PC-9 (cell line): ENCODE measurements at regions of chr6 and their contacts with region 1.

Region 1: GRCh38 chr6:75449716-75450115 is 43.9 kb downstream of the FILIP1 start:
- DNase-seq: peak; percentile 40 to 54
- H3K4me3 ChIP-seq: no peak overlapping the region
- H3K27ac ChIP-seq: no peak overlapping the region
- H3K4me1 ChIP-seq: no peaks in the 10 kb centered on the region
- H3K27me3 ChIP-seq: no peaks in the 10 kb centered on the region
- CTCF ChIP-seq: no peak

Region 2: GRCh38 chr6:75412969-75413662 is 36.6 kb before region 1 on chr6:
- CTCF ChIA-PET with region 1: no interaction called
- POLR2A ChIA-PET with region 1: no interaction called
- intact Hi-C with region 1: loop called (anchors 5 kb)
- DNase-seq: no peak
- H3K4me3 ChIP-seq: no peak overlapping the region
- H3K27ac ChIP-seq: no peak overlapping the region
- H3K4me1 ChIP-seq: peaks cover 5% of the 10 kb centered on the region; the same call in 1 of the 2 replicates
- H3K27me3 ChIP-seq: no peaks in the 10 kb centered on the region
- CTCF ChIP-seq: no peak